MCF 10A (cell line): ENCODE measurements at regions of chr7 and their contacts with region 1.

Region 1: DNA sequence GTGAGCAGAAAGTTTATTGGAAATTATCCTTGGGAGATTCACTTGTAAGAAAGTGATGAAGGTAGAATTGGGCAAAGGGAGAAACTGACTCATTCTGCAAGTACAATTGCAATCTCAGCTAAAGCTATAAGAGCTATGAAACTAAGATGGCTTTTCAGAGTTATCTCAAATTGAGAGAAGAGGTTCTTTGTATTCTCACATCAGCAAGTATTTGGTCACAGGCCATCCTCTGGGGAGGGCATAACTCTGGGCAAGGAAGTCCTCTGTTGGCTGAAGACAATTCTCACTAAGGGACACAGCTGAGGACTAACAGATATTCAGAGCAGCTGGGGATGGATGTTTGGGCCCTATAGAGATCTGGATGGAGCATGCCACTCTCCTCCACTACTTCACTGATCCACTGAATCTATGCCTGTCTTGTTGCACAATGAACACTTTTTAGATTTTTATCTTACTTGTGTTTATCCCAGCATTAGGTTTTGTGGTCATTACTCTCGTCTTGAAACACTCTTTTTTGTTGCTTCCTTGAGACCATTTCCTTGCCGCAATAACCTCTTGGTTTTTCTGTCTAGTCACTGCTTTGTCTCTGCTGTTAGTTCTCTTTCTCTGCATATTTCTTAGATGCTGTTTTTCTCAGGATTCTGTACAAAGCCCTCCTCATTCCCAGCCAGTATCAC is 115.1 kb downstream of the GNAI1 start:
- DNase-seq: no peak
- H3K4me3 Mint-ChIP-seq: no peak overlapping the region
- H3K27ac Mint-ChIP-seq: no peak overlapping the region
- H3K4me1 Mint-ChIP-seq: no peaks in the 10 kb centered on the region
- H3K27me3 Mint-ChIP-seq: no peaks in the 10 kb centered on the region
- CTCF ChIP-seq: no peak

Region 2: GRCh38 chr7:80231707-80232106 is 18.1 kb before region 1 on chr7:
- CTCF ChIA-PET with region 1: interaction called, 3 read pairs
- POLR2A ChIA-PET with region 1: interaction called, 3 read pairs
- intact Hi-C with region 1: loop called (anchors 1 kb)
- DNase-seq: peak; percentile 59
- H3K4me3 Mint-ChIP-seq: no peak overlapping the region
- H3K27ac Mint-ChIP-seq: peak overlapping the region; percentile 66
- H3K4me1 Mint-ChIP-seq: peaks cover 16% of the 10 kb centered on the region
- H3K27me3 Mint-ChIP-seq: no peaks in the 10 kb centered on the region
- CTCF ChIP-seq: no peak